ENCODE measurements at regions of chr11 and their contacts with region 1.

Region 1: GRCh38 chr11:69787457-69787856 is 12.3 kb upstream of the FGF4 start:
- DNase-seq: no peak
- H3K4me3 ChIP-seq: no peak overlapping the region
- H3K27ac ChIP-seq: no peak overlapping the region
- H3K4me1 ChIP-seq: peaks cover 12% of the 10 kb centered on the region
- H3K27me3 ChIP-seq: no peaks in the 10 kb centered on the region
- CTCF ChIP-seq: no peak

Region 2: DNA sequence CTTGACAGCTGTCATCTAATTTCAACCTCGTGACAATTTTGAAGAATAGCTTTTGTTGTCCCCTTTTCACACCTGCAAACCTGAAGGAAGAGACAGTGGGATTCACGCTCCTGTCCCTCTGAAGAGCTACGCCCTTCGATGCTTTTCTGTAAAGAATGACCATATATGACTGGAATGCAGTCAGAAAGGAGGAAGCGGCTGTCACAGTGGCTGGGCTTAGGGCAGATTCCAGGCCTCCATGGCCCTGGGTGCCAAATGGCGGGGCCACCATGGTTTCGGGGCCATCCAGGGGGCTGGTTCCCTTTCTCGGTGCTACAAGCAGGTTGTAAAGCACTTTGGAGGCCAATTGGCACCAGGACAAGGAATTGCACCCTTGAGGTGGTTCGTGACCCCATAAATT is 61.4 kb before region 1 on chr11:
- CTCF ChIA-PET with region 1: no interaction called
- POLR2A ChIA-PET with region 1: no interaction called
- intact Hi-C with region 1: loop called (anchors 5 kb)
- DNase-seq: peak in 1 of 2 experiments; percentile 39
- H3K4me3 ChIP-seq: no peak overlapping the region
- H3K27ac ChIP-seq: no peak overlapping the region
- H3K4me1 ChIP-seq: no peaks in the 10 kb centered on the region
- H3K27me3 ChIP-seq: no peaks in the 10 kb centered on the region
- CTCF ChIP-seq: no peak

Region 3: GRCh38 chr11:70034740-70035365 is 247.4 kb after region 1 on chr11:
- CTCF ChIA-PET with region 1: no interaction called
- POLR2A ChIA-PET with region 1: no interaction called
- intact Hi-C with region 1: no loop called
- DNase-seq: no peak
- H3K4me3 ChIP-seq: no peak overlapping the region
- H3K27ac ChIP-seq: no peak overlapping the region
- H3K4me1 ChIP-seq: peaks cover 12% of the 10 kb centered on the region
- H3K27me3 ChIP-seq: no peaks in the 10 kb centered on the region
- CTCF ChIP-seq: no peak

Measured in PC-9 (cell line).